ENCODE measurements at regions of chr16 and their contacts with region 1.

Region 1: GRCh38 chr16:64051824-64052223 is 1070.0 kb downstream of the CDH11 start:
- DNase-seq: no peak
- H3K4me3 ChIP-seq: no peak overlapping the region
- H3K27ac ChIP-seq: no peak overlapping the region
- H3K4me1 ChIP-seq: no peaks in the 10 kb centered on the region
- H3K27me3 ChIP-seq: peaks cover 4% of the 10 kb centered on the region; the same call in 1 of the 2 replicates
- CTCF ChIP-seq: peak; percentile 54

Region 2: GRCh38 chr16:63361032-63361624 is 690.7 kb before region 1 on chr16:
- CTCF ChIA-PET with region 1: no interaction called
- POLR2A ChIA-PET with region 1: no interaction called
- intact Hi-C with region 1: loop called (anchors 2 kb)
- DNase-seq: no peak
- H3K4me3 ChIP-seq: no peak overlapping the region
- H3K27ac ChIP-seq: no peak overlapping the region
- H3K4me1 ChIP-seq: no peaks in the 10 kb centered on the region
- H3K27me3 ChIP-seq: no peaks in the 10 kb centered on the region
- CTCF ChIP-seq: peak; percentile 82

Region 3: DNA sequence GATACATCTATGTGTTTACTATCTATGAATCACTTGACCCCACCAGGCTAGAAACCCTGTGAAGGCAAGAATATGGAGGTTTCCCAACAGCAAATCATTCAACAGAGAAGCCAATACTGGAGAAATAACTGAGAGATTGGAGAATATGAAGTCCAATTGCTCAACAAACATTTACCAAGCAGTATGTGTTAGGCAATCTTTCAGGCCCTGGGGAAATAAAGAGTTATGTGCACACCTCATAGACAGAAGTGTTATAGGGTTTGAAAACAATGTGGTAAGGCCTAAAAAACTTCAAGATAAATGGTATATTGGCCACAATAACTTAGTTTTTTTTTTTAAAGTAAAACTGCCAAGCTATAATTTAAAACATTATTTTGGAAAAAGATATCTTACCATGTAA is 175.7 kb before region 1 on chr16:
- CTCF ChIA-PET with region 1: no interaction called
- POLR2A ChIA-PET with region 1: no interaction called
- intact Hi-C with region 1: no loop called
- DNase-seq: no peak
- H3K4me3 ChIP-seq: no peak overlapping the region
- H3K27ac ChIP-seq: no peak overlapping the region
- H3K4me1 ChIP-seq: no peaks in the 10 kb centered on the region
- H3K27me3 ChIP-seq: no peaks in the 10 kb centered on the region
- CTCF ChIP-seq: no peak

Measured in PC-9 (cell line).